ENCODE measurements at regions of chr12 and their contacts with region 1.

Region 1: DNA sequence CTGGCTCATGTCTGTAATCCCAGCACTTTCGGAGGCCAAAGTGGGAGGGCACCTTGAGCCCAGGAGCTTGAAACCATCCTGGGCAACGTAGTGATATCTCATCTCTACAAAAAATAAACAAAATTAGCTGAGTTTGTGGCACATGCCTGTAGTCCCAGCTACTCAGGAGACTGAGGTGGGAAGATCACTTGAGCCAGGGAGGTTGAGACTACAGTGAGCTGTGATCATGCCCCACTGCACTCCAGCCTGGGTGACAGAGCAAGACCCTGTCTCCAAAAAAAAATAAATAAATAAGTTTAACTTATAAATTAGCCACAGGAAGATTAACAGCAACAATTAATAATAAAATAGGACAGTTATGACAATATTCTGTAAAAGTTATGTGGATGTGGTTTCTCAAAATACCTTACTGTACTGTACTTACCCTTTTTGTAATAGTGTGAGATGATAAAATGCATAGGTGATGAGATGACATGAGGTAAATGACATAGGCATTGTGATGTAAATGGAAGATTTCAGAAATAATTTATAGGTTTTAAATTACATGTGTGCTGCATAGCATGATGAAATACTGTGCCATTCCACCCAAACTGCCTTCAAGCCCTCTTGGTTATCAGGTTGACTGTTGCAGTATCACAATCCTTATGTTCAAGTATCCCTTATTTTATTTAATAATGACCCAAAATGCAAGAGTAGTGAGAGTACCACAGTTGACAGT is 22.0 kb downstream of the USP15 start:
- DNase-seq: no peak
- ATAC-seq: peak; percentile 9
- H3K4me3 ChIP-seq: no peak overlapping the region
- H3K4me3 Mint-ChIP-seq: peak overlapping the region in 8 of 10 donors; percentile 19 to 62 (median 49)
- H3K27ac ChIP-seq: no peak overlapping the region
- H3K27ac Mint-ChIP-seq: peak overlapping the region in 7 of 9 donors; percentile 8 to 77 (median 56)
- H3K4me1 ChIP-seq: peaks cover 5 to 28% of the 10 kb centered on the region in 2 donors
- H3K4me1 Mint-ChIP-seq: peaks cover 29 to 87% (median 72%) of the 10 kb centered on the region in 7 donors
- H3K27me3 ChIP-seq: no peaks in the 10 kb centered on the region
- H3K27me3 Mint-ChIP-seq: no peaks in the 10 kb centered on the region

Region 2: DNA sequence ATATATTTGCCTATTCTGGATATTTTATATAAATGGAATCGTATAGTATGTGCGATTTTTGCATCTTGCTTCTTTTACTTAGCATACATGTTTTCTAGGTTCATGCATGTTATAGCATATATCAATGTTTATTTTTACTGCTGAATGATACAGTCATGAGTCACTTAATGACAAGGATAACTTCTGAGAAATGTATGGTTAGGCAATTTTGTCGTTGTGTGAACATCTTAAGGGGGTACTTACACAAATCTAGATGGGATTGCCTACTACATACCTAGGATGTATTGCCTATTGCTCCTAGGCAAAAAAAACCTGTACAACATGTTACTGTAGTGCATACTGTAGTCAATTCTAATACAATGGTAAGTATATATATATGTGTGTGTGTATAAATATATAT is 13.3 kb before region 1 on chr12:
- CTCF ChIA-PET with region 1: no interaction called
- POLR2A ChIA-PET with region 1: no interaction called
- intact Hi-C with region 1: loop called (anchors 1 kb)
- DNase-seq: no peak
- ATAC-seq: peak; percentile 32
- H3K4me3 ChIP-seq: no peak overlapping the region
- H3K4me3 Mint-ChIP-seq: peak overlapping the region in 9 of 10 donors; percentile 7 to 90 (median 61)
- H3K27ac ChIP-seq: no peak overlapping the region
- H3K27ac Mint-ChIP-seq: peak overlapping the region in 3 of 9 donors; percentile 14 to 67 (median 20)
- H3K4me1 ChIP-seq: peaks cover 54 to 55% of the 10 kb centered on the region in 2 donors
- H3K4me1 Mint-ChIP-seq: peaks cover 60 to 99% (median 91%) of the 10 kb centered on the region in 7 donors
- H3K27me3 ChIP-seq: no peaks in the 10 kb centered on the region
- H3K27me3 Mint-ChIP-seq: no peaks in the 10 kb centered on the region

Region 3: DNA sequence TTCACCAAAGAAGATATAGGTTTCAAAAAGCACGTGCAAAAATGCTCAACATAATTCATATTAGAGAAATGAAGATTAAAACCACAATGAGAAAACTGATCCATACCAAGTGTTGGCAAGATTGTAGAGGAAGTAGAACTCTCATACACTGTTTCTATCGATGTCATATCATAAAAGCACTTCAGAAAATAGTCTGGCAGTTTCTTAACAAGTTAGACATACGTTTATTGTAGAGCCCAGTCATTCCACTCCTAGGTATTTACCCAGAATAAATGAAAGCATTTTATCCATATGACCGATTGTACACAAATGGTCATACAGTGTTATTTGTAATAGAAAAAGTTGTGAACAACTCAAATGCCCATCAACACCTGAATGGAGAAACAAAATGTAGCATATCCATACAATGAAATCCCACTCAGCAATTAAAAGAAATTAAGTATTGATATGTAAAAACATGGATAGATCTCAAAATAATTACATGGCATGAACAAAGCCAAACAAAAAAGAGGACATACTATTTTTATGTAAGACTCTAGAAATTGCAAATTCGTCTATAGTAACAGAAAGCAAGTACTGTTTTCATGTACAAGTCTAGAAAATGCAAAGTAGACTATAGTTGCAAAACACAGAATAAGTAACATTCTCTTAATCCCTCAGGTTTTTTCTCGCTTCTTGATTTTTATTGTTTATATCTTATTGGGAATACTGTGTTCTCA is 19.0 kb after region 1 on chr12:
- CTCF ChIA-PET with region 1: interaction called, 4 read pairs
- POLR2A ChIA-PET with region 1: no interaction called
- intact Hi-C with region 1: loop called in 1 of 2 experiments (anchors 2 kb)
- DNase-seq: no peak
- ATAC-seq: no peak
- H3K4me3 ChIP-seq: no peak overlapping the region
- H3K4me3 Mint-ChIP-seq: peak overlapping the region in 5 of 10 donors; percentile 3 to 56 (median 12)
- H3K27ac ChIP-seq: no peak overlapping the region
- H3K27ac Mint-ChIP-seq: peak overlapping the region in 5 of 9 donors; percentile 12 to 51 (median 24)
- H3K4me1 ChIP-seq: peaks cover 9% of the 10 kb centered on the region in 2 donors
- H3K4me1 Mint-ChIP-seq: peaks cover 36 to 77% (median 69%) of the 10 kb centered on the region in 7 donors
- H3K27me3 ChIP-seq: no peaks in the 10 kb centered on the region
- H3K27me3 Mint-ChIP-seq: no peaks in the 10 kb centered on the region

Region 4: GRCh38 chr12:62347922-62348650 is 65.9 kb after region 1 on chr12:
- CTCF ChIA-PET with region 1: no interaction called
- POLR2A ChIA-PET with region 1: no interaction called
- intact Hi-C with region 1: no loop called
- DNase-seq: no peak
- ATAC-seq: no peak
- H3K4me3 ChIP-seq: no peak overlapping the region
- H3K4me3 Mint-ChIP-seq: no peak overlapping the region
- H3K27ac ChIP-seq: no peak overlapping the region
- H3K27ac Mint-ChIP-seq: peak overlapping the region in 1 of 9 donors; percentile 45
- H3K4me1 ChIP-seq: peaks cover 0 to 4% of the 10 kb centered on the region in 2 donors
- H3K4me1 Mint-ChIP-seq: peaks cover 23 to 56% (median 35%) of the 10 kb centered on the region in 7 donors
- H3K27me3 ChIP-seq: no peaks in the 10 kb centered on the region
- H3K27me3 Mint-ChIP-seq: no peaks in the 10 kb centered on the region